Activated CD8-positive, alpha-beta T cell treated with anti-CD3 and anti-CD28 coated beads, Interleukin-2, amount 10 ng/mL, durations not matched to agents 7 days and 5 days (primary cell): ENCODE measurements at regions of chr17 and their contacts with region 1.

Region 1: GRCh38 chr17:7561028-7561575 is 617 bp upstream of the SENP3 start:
- DNase-seq: peak; percentile 91
- ATAC-seq: peak; percentile 74
- H3K4me3 Mint-ChIP-seq: peak overlapping the region; percentile 77
- H3K27ac Mint-ChIP-seq: peak overlapping the region; percentile 87
- H3K4me1 Mint-ChIP-seq: peaks cover 63% of the 10 kb centered on the region
- H3K27me3 Mint-ChIP-seq: no peaks in the 10 kb centered on the region

Region 2: GRCh38 chr17:7329374-7329996 is 231.6 kb before region 1 on chr17:
- CTCF ChIA-PET with region 1: interaction called, 10 read pairs
- POLR2A ChIA-PET with region 1: no interaction called
- DNase-seq: peak; percentile 98
- ATAC-seq: peak; percentile 63
- H3K4me3 Mint-ChIP-seq: peak overlapping the region; percentile 87
- H3K27ac Mint-ChIP-seq: peak overlapping the region; percentile 98
- H3K4me1 Mint-ChIP-seq: peaks cover 54% of the 10 kb centered on the region
- H3K27me3 Mint-ChIP-seq: no peaks in the 10 kb centered on the region

Region 3: GRCh38 chr17:7444682-7445618 is 116.2 kb before region 1 on chr17 and contains the start of gene CHRNB1:
- CTCF ChIA-PET with region 1: interaction called, 13 read pairs
- POLR2A ChIA-PET with region 1: interaction called, 4 read pairs
- DNase-seq: peak; percentile 37
- ATAC-seq: peak; percentile 17
- H3K4me3 Mint-ChIP-seq: peak within 1 kb of the TSS; percentile 63
- H3K27ac Mint-ChIP-seq: peak within 1 kb of the TSS; percentile 61
- H3K4me1 Mint-ChIP-seq: peaks cover 30% of the 10 kb centered on the region
- H3K27me3 Mint-ChIP-seq: peaks cover 28% of the 10 kb centered on the region
- total RNA-seq, gene CHRNB1: 14.1 to 15.7 TPM

Region 4: DNA sequence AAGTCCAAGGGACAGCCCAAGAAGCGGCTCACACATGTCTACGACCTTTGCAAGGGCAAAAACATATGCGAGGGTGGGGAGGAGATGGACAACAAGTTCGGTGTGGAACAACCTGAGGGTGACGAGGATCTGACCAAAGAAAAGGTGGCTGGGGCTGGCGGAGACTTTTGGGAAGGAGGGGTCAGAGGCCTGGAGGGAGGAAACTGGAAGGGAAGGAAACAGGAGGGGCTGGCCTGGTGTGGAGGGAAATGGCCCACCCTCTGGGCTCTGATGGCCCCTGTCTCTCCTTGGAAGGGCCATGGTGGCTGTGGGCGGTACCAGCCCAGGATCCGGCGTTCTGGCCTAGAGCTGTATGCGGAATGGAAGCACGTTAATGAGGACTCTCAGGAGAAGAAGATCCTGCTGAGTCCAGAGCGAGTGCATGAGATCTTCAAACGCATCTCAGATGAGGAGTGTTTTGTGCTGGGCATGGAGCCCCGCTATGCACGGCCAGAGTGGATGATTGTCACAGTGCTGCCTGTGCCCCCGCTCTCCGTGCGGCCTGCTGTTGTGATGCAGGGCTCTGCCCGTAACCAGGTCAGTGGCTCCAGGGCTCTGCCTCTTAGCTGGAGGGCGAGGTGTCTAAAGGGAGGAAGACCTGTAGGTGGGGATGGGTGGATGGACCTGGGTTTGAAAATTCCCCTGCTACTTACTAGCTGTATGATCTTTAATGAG is 64.5 kb before region 1 on chr17:
- CTCF ChIA-PET with region 1: interaction called, 18 read pairs
- POLR2A ChIA-PET with region 1: no interaction called
- DNase-seq: no peak
- ATAC-seq: peak; percentile 17
- H3K4me3 Mint-ChIP-seq: no peak overlapping the region
- H3K27ac Mint-ChIP-seq: no peak overlapping the region
- H3K4me1 Mint-ChIP-seq: peaks cover 23% of the 10 kb centered on the region
- H3K27me3 Mint-ChIP-seq: no peaks in the 10 kb centered on the region

Region 5: DNA sequence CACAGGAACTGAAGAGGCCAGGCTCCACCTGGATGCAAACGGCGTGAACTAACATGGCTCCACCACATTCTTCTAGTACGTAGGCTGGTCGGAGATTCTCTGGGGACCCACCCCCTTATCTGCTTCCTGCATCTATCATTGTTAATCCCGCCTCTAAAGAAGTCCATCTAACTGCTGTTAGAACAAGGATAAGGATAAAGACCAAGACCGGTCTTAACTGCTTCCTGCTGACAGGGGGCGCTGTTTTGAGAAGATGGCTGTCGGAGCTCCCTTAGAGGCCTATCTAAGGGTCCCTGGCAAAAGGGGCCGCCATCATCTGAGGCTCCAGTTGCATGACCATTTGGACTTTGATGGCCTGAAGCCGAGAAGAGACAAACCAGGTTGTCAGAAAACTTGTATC is 38.1 kb before region 1 on chr17:
- CTCF ChIA-PET with region 1: interaction called, 264 read pairs
- POLR2A ChIA-PET with region 1: interaction called, 3 read pairs
- DNase-seq: peak; percentile 58
- ATAC-seq: peak; percentile 68
- H3K4me3 Mint-ChIP-seq: no peak overlapping the region
- H3K27ac Mint-ChIP-seq: no peak overlapping the region
- H3K4me1 Mint-ChIP-seq: peaks cover 6% of the 10 kb centered on the region
- H3K27me3 Mint-ChIP-seq: no peaks in the 10 kb centered on the region

Region 6: GRCh38 chr17:7572588-7573323 is 11.7 kb after region 1 on chr17:
- CTCF ChIA-PET with region 1: interaction called, 43 read pairs
- POLR2A ChIA-PET with region 1: interaction called, 17 read pairs
- DNase-seq: no peak
- ATAC-seq: peak; percentile 13
- H3K4me3 Mint-ChIP-seq: peak overlapping the region; percentile 93
- H3K27ac Mint-ChIP-seq: peak overlapping the region; percentile 100
- H3K4me1 Mint-ChIP-seq: peaks cover 62% of the 10 kb centered on the region
- H3K27me3 Mint-ChIP-seq: no peaks in the 10 kb centered on the region